MCF 10A (cell line): ENCODE measurements at regions of chr1 and their contacts with region 1.

Region 1: DNA sequence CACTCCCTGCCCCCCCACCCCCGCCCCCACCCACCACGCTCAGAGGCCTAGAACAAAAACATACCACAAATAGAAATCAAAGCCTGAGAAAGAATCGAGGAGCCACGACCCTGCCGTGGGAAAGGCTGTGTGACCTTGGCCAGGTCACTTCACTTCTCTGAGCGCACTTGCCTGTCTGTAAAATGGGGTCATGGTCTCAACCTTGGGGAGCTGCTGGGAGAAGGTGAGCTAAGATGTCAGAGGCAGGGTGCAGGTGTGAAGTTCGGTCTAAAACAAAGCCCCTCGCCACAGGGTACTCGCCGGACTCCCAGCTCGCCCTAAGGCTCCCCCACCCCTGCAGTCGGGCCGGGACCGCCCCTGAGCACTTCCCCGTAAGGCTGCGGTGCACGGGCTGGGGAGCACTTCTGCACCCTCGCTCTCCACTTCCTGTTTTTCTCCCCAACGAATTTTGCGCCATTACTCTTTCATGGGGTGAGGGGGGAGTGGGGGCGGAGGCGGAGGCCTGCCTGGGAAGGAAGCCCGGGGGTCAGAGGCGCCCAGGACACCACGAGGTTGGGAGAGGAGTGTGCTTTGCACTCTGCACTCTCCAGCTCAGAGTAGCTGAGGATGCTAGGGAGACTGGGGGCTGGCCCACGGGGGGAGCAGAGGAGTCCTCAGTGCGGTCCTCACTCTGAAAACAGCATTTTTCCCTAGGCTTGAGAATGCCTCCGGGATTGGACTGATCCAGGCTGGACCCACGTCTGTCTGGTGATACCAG is 21.9 kb upstream of the PIK3CD start:
- DNase-seq: no peak
- H3K4me3 Mint-ChIP-seq: no peak overlapping the region
- H3K27ac Mint-ChIP-seq: no peak overlapping the region
- H3K4me1 Mint-ChIP-seq: no peaks in the 10 kb centered on the region
- H3K27me3 Mint-ChIP-seq: peaks cover 10% of the 10 kb centered on the region
- CTCF ChIP-seq: no peak

Region 2: DNA sequence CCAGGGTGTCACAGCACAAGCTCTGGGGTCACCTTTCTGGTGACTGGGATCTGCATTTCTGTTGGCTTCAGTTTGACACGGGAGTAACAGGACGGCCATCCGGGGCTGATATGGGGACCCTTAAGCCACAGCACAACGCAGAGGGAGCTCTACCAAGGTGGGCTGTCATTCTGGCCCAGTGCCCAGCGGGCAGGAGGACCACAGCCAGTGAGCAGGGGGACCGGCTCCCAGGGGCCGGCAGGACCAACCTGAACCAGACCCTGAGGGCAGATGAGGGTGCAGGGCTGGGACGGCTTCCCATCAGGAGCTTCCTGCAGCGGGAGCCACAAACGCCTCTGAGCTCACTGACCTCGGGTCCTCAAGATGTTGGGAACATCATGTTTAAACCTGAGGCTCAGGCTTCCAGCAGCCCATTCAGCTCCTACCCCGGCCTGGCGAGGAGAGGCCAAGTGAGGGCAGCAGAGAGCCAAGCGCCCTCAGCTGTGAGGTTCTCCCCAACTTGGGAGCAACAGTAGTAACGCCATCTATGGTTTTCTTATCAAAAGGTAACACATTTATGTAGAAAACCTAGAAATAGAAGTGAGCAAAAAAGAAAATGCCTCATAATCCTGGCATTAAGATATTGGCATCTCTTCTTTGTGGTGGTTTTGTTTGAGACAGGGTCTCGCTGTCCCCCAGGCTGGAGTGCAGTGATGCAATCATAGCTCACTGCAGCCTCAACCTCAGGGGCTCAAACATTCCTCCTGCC is 14.1 kb before region 1 on chr1:
- CTCF ChIA-PET with region 1: interaction called, 14 read pairs
- POLR2A ChIA-PET with region 1: no interaction called
- intact Hi-C with region 1: no loop called
- DNase-seq: peak; percentile 60
- H3K4me3 Mint-ChIP-seq: no peak overlapping the region
- H3K27ac Mint-ChIP-seq: no peak overlapping the region
- H3K4me1 Mint-ChIP-seq: no peaks in the 10 kb centered on the region
- H3K27me3 Mint-ChIP-seq: no peaks in the 10 kb centered on the region
- CTCF ChIP-seq: peak; percentile 57

Region 3: GRCh38 chr1:9643351-9644256 is 14.0 kb after region 1 on chr1:
- CTCF ChIA-PET with region 1: interaction called, 18 read pairs
- POLR2A ChIA-PET with region 1: no interaction called
- intact Hi-C with region 1: no loop called
- DNase-seq: no peak
- H3K4me3 Mint-ChIP-seq: no peak overlapping the region
- H3K27ac Mint-ChIP-seq: peak overlapping the region; percentile 73
- H3K4me1 Mint-ChIP-seq: peaks cover 12% of the 10 kb centered on the region
- H3K27me3 Mint-ChIP-seq: no peaks in the 10 kb centered on the region
- CTCF ChIP-seq: no peak

Region 4: DNA sequence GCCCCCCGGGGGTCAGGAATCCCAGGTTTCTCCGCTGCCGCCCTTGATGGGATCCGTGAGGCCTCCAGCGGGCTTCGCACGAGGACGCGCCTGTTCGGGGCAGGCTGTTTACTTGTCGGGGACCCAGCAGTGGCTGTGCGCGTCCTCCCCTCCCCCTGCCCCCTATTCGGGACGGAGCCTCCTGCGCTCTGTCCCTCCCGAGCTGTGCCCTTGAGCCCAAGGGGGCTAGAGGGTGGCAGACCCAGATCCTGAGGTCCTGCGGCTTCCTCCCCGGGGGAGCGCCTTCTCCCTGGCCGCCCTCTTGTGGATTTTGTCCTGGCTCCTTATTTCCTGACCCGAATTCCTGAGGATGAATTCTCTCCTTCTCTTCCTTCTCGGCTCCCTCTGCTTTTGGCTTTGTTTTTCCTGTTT is 60.4 kb after region 1 on chr1:
- CTCF ChIA-PET with region 1: interaction called, 5 read pairs
- POLR2A ChIA-PET with region 1: no interaction called
- intact Hi-C with region 1: loop called (anchors 1 kb)
- DNase-seq: no peak
- H3K4me3 Mint-ChIP-seq: peak overlapping the region; percentile 83
- H3K27ac Mint-ChIP-seq: peak overlapping the region; percentile 84
- H3K4me1 Mint-ChIP-seq: peaks cover 15% of the 10 kb centered on the region
- H3K27me3 Mint-ChIP-seq: no peaks in the 10 kb centered on the region
- CTCF ChIP-seq: no peak

Region 5: GRCh38 chr1:9724706-9725476 is 95.3 kb after region 1 on chr1:
- CTCF ChIA-PET with region 1: interaction called, 14 read pairs
- POLR2A ChIA-PET with region 1: interaction called, 3 read pairs
- intact Hi-C with region 1: loop called (anchors 1 kb)
- DNase-seq: peak; percentile 73
- H3K4me3 Mint-ChIP-seq: no peak overlapping the region
- H3K27ac Mint-ChIP-seq: no peak overlapping the region
- H3K4me1 Mint-ChIP-seq: no peaks in the 10 kb centered on the region
- H3K27me3 Mint-ChIP-seq: no peaks in the 10 kb centered on the region
- CTCF ChIP-seq: peak; percentile 86

Region 6: DNA sequence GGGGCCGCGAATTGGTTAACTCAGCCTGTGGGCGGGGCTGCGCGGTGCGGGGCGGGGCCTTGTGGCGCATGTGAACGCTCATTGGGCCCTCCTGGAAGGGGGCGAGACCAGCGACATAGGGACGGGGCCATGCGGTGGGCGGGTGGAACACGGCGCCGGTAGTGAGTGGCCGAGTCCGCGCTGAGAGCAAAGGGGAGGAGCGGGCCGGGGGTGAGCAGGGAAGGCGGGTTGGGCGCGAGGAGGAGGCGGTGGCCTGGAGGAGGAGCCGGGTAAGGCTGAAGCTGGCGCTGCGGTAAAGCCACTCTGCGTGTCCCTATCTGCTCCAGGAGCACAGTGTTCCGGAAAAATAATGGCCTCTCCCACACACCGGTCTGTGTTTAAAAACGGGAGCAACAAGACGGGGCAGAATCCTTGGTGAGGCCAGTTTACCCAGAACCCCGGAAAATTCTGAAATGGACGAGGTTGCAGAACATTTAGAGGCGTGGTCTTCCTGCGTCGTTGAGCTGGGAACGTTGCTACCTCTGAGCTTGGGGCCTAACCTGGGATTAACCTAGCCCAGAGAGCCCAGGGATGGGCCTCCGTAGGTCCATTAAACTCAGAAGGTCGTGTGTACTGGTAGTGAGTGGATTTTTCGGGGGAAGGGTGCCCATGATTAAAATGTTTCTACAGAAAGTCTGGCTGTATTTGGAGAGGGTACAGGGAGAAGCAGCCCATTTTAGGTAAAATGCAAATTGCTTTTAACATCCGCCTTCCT is 281.0 kb after region 1 on chr1:
- CTCF ChIA-PET with region 1: interaction called, 12 read pairs
- POLR2A ChIA-PET with region 1: no interaction called
- intact Hi-C with region 1: no loop called
- DNase-seq: peak; percentile 99
- H3K4me3 Mint-ChIP-seq: peak overlapping the region; percentile 93
- H3K27ac Mint-ChIP-seq: peak overlapping the region; percentile 99
- H3K4me1 Mint-ChIP-seq: peaks cover 30% of the 10 kb centered on the region
- H3K27me3 Mint-ChIP-seq: no peaks in the 10 kb centered on the region
- CTCF ChIP-seq: no peak